CD4-positive, alpha-beta memory T cell (primary cell): ENCODE measurements at regions of chr15 and their contacts with region 1.

Region 1: GRCh38 chr15:78437762-78438302 is at the start of gene IREB2:
- DNase-seq: peak; percentile 96 to 99 (median 99)
- H3K4me3 ChIP-seq: peak within 1 kb of the TSS; percentile 82 to 92
- H3K4me3 Mint-ChIP-seq: peak within 1 kb of the TSS; percentile 94 to 99 (median 96)
- H3K27ac ChIP-seq: peak within 1 kb of the TSS; percentile 90
- H3K27ac Mint-ChIP-seq: peak within 1 kb of the TSS; percentile 93 to 99 (median 96)
- H3K4me1 ChIP-seq: peaks cover 46% of the 10 kb centered on the region
- H3K4me1 Mint-ChIP-seq: peaks cover 27 to 53% (median 41%) of the 10 kb centered on the region in 4 donors
- H3K27me3 ChIP-seq: no peaks in the 10 kb centered on the region
- H3K27me3 Mint-ChIP-seq: no peaks in the 10 kb centered on the region
- total RNA-seq, gene IREB2: 65.0 to 71.9 TPM

Region 2: DNA sequence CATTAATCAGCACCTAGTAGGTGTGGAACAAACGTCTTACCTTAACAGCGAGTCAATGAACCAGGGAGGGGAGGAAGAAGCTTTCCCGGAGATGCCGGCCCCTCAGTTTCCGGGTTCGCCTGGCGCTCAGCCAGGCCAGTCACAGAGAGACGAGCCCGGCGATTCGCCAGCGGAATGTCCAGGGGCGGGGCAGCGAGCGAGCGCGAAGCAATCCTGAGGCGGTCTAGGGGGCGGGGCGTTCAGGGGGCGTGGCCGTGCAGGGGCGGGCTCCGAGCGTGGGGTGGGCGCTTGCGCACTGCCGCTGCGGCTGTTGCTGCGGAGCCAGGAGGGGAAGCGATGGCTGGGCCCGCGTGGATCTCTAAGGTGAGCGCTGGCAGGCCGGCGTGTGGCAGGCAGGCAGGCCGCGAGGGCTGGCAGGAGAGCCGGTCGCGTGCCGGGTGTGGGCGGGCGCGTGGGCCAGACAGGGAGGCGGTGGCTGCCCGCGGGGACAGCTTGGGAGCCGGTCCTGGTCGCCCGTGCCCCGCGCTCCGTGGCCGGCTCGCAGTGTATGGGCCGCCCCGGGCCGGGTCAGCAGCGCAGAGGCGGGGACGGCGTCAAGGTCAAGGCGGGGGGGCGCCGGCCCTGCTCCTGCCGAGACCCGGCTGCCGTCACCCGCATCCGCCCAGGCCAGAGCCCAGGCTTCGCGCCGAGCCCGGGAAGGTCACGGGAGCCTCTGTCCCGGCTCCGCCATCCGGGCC is 288.6 kb before region 1 on chr15 and contains the start of gene IDH3A:
- CTCF ChIA-PET with region 1: no interaction called
- POLR2A ChIA-PET with region 1: interaction called, 10 read pairs
- intact Hi-C with region 1: no loop called
- DNase-seq: peak; percentile 98 to 99 (median 99)
- H3K4me3 ChIP-seq: peak within 1 kb of the TSS; percentile 63 to 68
- H3K4me3 Mint-ChIP-seq: peak within 1 kb of the TSS; percentile 92 to 99 (median 94)
- H3K27ac ChIP-seq: peak within 1 kb of the TSS; percentile 74
- H3K27ac Mint-ChIP-seq: peak within 1 kb of the TSS; percentile 91 to 96 (median 94)
- H3K4me1 ChIP-seq: peaks cover 26% of the 10 kb centered on the region
- H3K4me1 Mint-ChIP-seq: peaks cover 28 to 46% (median 38%) of the 10 kb centered on the region in 4 donors
- H3K27me3 ChIP-seq: no peaks in the 10 kb centered on the region
- H3K27me3 Mint-ChIP-seq: no peaks in the 10 kb centered on the region
- total RNA-seq, gene IDH3A: 45.1 to 46.8 TPM

Region 3: GRCh38 chr15:78299101-78299930 is 138.5 kb before region 1 on chr15 and contains the start of gene SKIC8:
- CTCF ChIA-PET with region 1: interaction called, 6 read pairs
- POLR2A ChIA-PET with region 1: interaction called, 32 read pairs
- intact Hi-C with region 1: loop called (anchors 1 kb)
- DNase-seq: peak; percentile 89 to 91 (median 89)
- H3K4me3 ChIP-seq: peak within 1 kb of the TSS; percentile 70 to 95
- H3K4me3 Mint-ChIP-seq: peak within 1 kb of the TSS; percentile 96 to 99 (median 97)
- H3K27ac ChIP-seq: peak within 1 kb of the TSS; percentile 73
- H3K27ac Mint-ChIP-seq: peak within 1 kb of the TSS; percentile 86 to 99 (median 97)
- H3K4me1 ChIP-seq: peaks cover 21% of the 10 kb centered on the region
- H3K4me1 Mint-ChIP-seq: peaks cover 13 to 31% (median 19%) of the 10 kb centered on the region in 4 donors
- H3K27me3 ChIP-seq: no peaks in the 10 kb centered on the region
- H3K27me3 Mint-ChIP-seq: no peaks in the 10 kb centered on the region
- total RNA-seq, gene SKIC8: 43.6 to 45.5 TPM

Region 4: DNA sequence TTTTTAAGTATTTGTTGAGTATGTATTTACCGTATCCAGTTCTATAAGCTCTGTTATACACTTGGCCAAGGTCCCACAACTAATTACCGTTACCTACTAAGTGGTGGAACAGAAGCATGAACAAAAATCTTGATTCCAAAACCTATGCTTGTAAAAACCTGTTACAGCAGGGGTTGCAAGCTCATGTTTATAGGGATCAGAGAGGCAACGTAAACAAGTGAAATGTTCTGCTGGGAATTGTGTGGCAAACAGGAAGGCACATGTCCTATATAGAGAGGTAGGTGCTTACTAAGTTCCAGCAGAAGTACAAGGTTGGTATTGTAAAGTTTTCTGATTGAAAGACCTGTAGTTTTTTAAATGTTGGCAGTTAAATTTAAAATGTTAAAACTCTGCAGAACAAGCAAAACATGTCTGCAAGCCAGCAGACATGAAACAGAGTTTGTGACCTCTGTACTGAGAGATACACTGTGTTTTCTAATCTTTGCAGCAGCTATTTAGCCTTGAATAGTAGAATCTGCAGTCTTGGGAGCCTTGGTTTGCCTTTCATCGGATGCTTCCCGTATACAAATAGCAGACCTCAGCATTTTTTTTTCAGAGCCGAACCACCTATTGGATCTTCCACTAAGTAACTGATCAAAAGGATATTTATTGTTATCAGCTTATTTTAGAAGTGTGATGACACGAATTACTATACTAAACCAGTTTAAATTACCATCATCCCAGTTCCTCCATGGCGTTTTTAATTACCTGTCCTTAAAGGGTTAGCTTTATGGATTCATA is 11.6 kb after region 1 on chr15:
- CTCF ChIA-PET with region 1: no interaction called
- POLR2A ChIA-PET with region 1: interaction called, 23 read pairs
- intact Hi-C with region 1: no loop called
- DNase-seq: no peak
- H3K4me3 ChIP-seq: no peak overlapping the region
- H3K4me3 Mint-ChIP-seq: no peak overlapping the region
- H3K27ac ChIP-seq: no peak overlapping the region
- H3K27ac Mint-ChIP-seq: peak overlapping the region in 1 of 7 donors; percentile 15
- H3K4me1 ChIP-seq: peaks cover 38% of the 10 kb centered on the region
- H3K4me1 Mint-ChIP-seq: peaks cover 50 to 85% (median 68%) of the 10 kb centered on the region in 4 donors
- H3K27me3 ChIP-seq: no peaks in the 10 kb centered on the region
- H3K27me3 Mint-ChIP-seq: no peaks in the 10 kb centered on the region

Region 5: DNA sequence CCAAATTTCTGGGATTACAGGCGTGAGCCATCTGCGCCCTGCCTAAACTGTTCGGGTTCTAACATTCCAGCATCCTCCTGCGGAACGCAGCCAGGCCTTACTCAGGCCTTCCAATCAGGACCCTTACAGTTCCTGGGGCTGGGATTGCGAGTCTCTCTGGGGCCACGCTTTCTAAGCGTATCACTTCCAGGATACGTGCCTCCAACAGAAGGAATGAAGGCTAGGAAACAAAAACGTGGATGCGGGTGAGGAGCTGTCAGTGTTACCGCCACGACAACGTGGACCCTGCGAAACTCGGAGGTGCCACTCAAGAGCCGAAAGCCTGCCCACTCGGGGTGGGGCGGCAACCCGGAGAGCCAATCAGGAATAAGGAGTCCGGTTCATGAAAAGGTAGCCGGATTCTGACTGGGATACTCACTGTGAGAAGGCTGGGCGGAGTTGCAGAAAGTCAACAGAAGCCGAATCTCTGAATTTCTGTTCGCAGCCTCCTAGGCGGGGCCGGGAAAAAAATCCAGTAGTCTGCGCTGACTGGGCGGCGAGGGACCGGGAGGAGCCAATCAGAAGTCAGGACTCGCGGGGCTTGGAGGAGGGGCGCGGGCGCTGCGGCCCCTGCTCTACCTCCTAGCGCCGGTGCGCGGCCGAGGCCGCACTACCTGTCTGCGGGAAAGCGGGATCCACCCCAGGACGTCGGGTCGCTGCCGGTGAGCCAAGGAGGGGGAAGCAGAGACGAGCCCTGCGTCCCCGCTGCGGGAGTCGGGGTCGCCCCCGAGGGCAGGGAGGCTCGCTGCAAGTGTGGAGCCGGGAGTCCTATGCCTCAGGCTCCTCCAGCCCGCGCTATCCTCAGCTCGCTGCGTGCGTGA is 69.4 kb after region 1 on chr15 and contains the start of gene HYKK:
- CTCF ChIA-PET with region 1: no interaction called
- POLR2A ChIA-PET with region 1: interaction called, 11 read pairs
- intact Hi-C with region 1: no loop called
- DNase-seq: peak; percentile 60 to 75 (median 63)
- H3K4me3 ChIP-seq: peak within 1 kb of the TSS; percentile 45 to 54
- H3K4me3 Mint-ChIP-seq: peak within 1 kb of the TSS; percentile 89 to 98 (median 94)
- H3K27ac ChIP-seq: peak within 1 kb of the TSS; percentile 48
- H3K27ac Mint-ChIP-seq: peak within 1 kb of the TSS; percentile 31 to 86 (median 80)
- H3K4me1 ChIP-seq: peaks cover 24% of the 10 kb centered on the region
- H3K4me1 Mint-ChIP-seq: peaks cover 14 to 33% (median 23%) of the 10 kb centered on the region in 4 donors
- H3K27me3 ChIP-seq: no peaks in the 10 kb centered on the region
- H3K27me3 Mint-ChIP-seq: peaks cover 0 to 5% of the 10 kb centered on the region in 2 donors
- total RNA-seq, gene HYKK: 4.8 to 5.7 TPM

Region 6: GRCh38 chr15:78565097-78565951 is 127.5 kb after region 1 on chr15 and contains the start of gene CHRNA5:
- CTCF ChIA-PET with region 1: no interaction called
- POLR2A ChIA-PET with region 1: interaction called, 10 read pairs
- intact Hi-C with region 1: no loop called
- DNase-seq: peak; percentile 28 to 57 (median 36)
- H3K4me3 ChIP-seq: peak within 1 kb of the TSS; percentile 49 to 57
- H3K4me3 Mint-ChIP-seq: peak within 1 kb of the TSS; percentile 87 to 98 (median 90)
- H3K27ac ChIP-seq: peak within 1 kb of the TSS; percentile 30
- H3K27ac Mint-ChIP-seq: peak within 1 kb of the TSS; percentile 14 to 88 (median 73)
- H3K4me1 ChIP-seq: peaks cover 18% of the 10 kb centered on the region
- H3K4me1 Mint-ChIP-seq: peaks cover 7 to 24% (median 17%) of the 10 kb centered on the region in 4 donors
- H3K27me3 ChIP-seq: peaks cover 8% of the 10 kb centered on the region
- H3K27me3 Mint-ChIP-seq: peaks cover 2 to 10% of the 10 kb centered on the region in 2 donors
- total RNA-seq, gene CHRNA5: 1.3 to 1.6 TPM

Region 7: DNA sequence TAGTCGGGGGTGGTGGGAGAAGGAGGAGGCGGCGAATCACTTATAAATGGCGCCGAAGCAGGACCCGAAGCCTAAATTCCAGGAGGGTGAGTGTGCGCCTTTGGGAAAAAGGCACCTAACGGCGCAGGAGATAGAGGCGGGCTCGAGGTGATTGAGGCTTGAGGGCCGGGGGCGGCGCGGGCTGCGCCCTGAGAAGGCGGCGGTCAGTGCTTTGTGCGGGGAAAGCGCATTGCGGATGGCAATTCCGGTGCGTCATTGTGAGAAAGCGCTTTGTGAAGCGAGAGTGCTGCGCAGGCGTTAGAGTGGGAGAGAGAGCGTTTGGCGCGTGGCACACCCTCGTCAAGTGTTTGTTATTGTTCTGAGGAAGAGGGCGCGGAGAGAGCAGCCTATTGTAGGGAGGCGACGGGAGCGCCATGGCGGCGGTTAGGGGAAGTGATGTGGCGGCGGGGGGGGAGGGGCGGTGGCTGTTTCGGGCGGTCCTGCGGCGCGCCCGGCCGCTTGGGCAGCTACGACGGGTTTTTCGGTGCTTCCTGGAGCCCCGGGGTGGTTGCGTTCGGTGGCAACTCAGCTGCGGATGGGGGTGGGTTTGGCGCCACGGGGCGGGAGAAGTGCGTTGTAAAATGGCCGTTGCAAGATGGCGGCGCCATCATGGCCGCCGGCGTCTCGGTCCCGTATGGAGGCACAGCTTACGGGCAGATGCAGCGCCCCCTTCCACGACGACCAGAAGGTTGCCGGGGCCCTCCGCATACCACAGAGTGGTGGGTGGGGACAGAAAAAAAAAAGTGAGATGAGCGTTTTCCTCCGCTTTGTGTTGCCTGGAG is 435.4 kb after region 1 on chr15:
- CTCF ChIA-PET with region 1: no interaction called
- POLR2A ChIA-PET with region 1: interaction called, 7 read pairs
- intact Hi-C with region 1: loop called (anchors 1 kb)
- DNase-seq: peak; percentile 89 to 93 (median 91)
- H3K4me3 ChIP-seq: peak overlapping the region; percentile 59 to 91
- H3K4me3 Mint-ChIP-seq: peak overlapping the region; percentile 96 to 100 (median 99)
- H3K27ac ChIP-seq: peak overlapping the region; percentile 100
- H3K27ac Mint-ChIP-seq: peak overlapping the region; percentile 100
- H3K4me1 ChIP-seq: peaks cover 43% of the 10 kb centered on the region
- H3K4me1 Mint-ChIP-seq: peaks cover 22 to 67% (median 35%) of the 10 kb centered on the region in 4 donors
- H3K27me3 ChIP-seq: no peaks in the 10 kb centered on the region
- H3K27me3 Mint-ChIP-seq: no peaks in the 10 kb centered on the region